T-cell (primary cell): ENCODE measurements at regions of chr6 and their contacts with region 1.

Region 1: GRCh38 chr6:25103603-25104002 is 167.8 kb upstream of the RIPOR2 start:
- DNase-seq: no peak
- ATAC-seq: no peak
- H3K4me3 ChIP-seq: no peak overlapping the region
- H3K4me3 Mint-ChIP-seq: no peak overlapping the region
- H3K27ac ChIP-seq: no peak overlapping the region
- H3K27ac Mint-ChIP-seq: no peak overlapping the region
- H3K4me1 ChIP-seq: no peaks in the 10 kb centered on the region
- H3K4me1 Mint-ChIP-seq: peaks cover 0 to 9% (median 7%) of the 10 kb centered on the region in 3 donors
- H3K27me3 ChIP-seq: no peaks in the 10 kb centered on the region
- H3K27me3 Mint-ChIP-seq: no peaks in the 10 kb centered on the region

Region 2: DNA sequence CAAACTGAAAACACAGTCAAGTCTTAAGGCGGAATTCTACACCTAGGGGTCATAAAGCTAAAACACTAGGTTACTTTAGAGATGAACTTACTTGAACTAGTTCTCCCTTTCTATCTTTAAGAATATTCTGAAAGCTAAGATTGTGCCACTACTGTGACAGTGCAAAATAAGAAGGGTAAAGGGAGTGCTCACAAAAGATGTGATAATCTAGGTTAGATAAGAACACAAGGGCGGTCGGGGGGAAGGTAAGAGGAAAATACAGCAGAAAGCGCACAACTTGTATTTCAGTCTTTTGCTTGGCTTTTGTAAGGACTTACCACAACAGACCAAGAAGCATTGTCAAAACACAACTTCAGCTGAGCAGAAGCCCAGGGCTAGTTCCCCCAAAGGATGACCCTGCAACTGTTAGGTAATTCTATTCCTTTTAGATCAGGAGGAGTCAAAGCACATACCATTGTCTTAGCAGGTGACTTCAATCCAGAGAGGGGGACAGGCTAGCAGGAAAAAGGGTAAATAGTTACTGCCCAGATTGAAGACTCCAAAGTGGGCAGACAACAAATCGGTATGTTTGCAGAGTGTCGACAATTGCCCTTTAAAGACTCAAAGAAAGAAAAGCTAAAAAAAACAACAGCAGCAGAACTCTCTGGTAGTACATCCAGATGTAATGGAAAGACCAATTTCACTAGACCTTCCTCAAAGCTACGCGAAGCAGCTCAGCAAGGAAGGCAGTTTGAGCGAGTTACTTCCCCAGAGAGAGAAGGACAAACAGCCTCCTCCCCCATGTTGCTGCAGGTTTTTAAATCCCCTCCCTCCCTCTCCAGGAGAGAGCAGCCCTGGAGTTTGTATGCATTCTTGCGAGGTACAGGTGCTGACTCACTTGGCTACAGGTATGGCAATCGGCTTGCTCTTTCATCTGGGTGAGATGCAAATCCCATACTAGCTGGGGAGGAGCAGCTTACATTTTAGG is 226.8 kb before region 1 on chr6:
- CTCF ChIA-PET with region 1: interaction called in 1 of 2 experiments, 12 read pairs
- POLR2A ChIA-PET with region 1: no interaction called
- DNase-seq: no peak
- ATAC-seq: peak in 1 of 4 experiments; percentile 11
- H3K4me3 ChIP-seq: no peak overlapping the region
- H3K4me3 Mint-ChIP-seq: peak overlapping the region in 2 of 3 donors; percentile 8 to 30
- H3K27ac ChIP-seq: peak overlapping the region; percentile 19
- H3K27ac Mint-ChIP-seq: peak overlapping the region; percentile 75 to 80
- H3K4me1 ChIP-seq: peaks cover 29 to 38% of the 10 kb centered on the region in 2 experiments
- H3K4me1 Mint-ChIP-seq: peaks cover 90 to 92% (median 91%) of the 10 kb centered on the region in 3 donors
- H3K27me3 ChIP-seq: no peaks in the 10 kb centered on the region
- H3K27me3 Mint-ChIP-seq: no peaks in the 10 kb centered on the region

Region 3: DNA sequence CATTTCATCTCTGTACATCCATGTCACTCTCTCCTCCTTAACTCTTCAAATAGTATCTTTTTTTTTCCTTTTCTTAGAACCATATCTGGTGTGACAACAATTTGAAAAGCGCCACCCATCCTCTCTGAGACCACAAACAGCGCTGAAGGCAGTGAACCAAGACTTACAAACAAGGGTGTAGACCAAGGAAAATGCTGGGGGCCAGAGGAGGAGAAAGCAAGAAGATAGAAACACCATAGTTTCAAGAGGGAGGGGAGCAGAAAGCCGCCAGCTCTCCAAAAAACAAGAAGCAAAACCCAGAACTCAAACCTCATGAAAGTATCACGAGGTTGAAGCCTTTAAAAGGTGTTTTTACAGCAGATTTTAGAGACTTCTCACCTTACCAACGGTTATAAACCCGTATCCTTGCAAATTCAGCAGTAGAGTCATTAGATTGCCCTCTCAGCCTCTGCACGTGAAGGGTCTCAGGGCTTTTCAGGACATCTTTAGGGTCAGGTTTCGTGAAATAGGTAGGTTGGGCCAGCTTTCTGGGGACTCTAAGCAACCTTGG is 154.5 kb before region 1 on chr6:
- CTCF ChIA-PET with region 1: no interaction called
- POLR2A ChIA-PET with region 1: no interaction called
- DNase-seq: peak in 34 of 35 experiments; percentile 39 to 82 (median 60)
- ATAC-seq: peak; percentile 69 to 81 (median 78)
- H3K4me3 ChIP-seq: peak overlapping the region; percentile 24 to 60
- H3K4me3 Mint-ChIP-seq: peak overlapping the region; percentile 55 to 76 (median 60)
- H3K27ac ChIP-seq: peak overlapping the region; percentile 76
- H3K27ac Mint-ChIP-seq: peak overlapping the region; percentile 96 to 98
- H3K4me1 ChIP-seq: peaks cover 63 to 68% of the 10 kb centered on the region in 2 experiments
- H3K4me1 Mint-ChIP-seq: peaks cover 75 to 82% (median 78%) of the 10 kb centered on the region in 3 donors
- H3K27me3 ChIP-seq: no peaks in the 10 kb centered on the region
- H3K27me3 Mint-ChIP-seq: no peaks in the 10 kb centered on the region

Region 4: DNA sequence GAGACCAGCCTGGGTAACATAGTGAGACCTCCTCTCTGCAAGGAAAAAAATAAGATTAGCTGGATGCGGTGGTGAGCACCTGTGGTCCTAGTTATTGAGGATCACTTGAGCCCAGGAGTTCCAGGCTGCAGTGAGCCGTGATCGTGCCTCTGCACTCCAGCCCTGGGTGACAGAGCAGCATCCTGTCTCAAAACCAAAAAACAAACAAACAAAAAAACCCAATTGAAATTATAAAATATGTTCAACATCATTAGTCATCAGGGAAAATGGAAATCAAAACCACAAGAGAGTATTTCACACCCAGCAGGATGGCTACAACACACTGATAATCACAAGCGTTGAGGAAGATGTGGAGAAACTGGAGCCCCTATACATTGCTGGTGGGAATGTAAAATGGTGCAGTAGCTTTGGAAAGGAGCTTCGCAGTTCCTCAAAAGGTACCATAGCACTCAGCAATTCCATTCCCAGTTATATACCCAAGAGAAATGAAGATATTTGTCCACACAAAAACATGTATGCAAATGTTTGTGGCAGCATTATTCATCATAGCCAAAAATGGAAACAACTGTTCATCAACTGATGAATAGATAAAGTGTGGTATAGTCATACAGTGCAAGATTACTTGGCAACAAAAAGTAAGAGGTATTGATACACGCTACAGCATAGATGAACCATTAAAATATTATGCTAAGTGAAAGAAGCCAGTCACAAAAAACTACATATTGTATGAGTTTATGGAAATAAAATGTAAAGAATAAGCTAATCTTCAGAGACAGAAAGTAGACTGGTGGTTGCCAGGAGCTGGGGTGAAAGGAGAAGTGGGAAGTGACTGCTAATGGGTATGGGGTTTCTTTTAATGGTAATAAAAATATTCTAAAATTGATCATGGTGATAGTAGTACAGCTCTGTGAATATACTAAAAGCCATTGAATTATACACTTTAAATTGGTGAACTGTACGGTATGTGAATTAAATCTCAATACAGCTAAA is 129.1 kb before region 1 on chr6:
- CTCF ChIA-PET with region 1: no interaction called
- POLR2A ChIA-PET with region 1: interaction called in 1 of 2 experiments, 14 read pairs
- DNase-seq: peak in 4 of 35 experiments; percentile 8 to 56 (median 22)
- ATAC-seq: peak; percentile 80 to 89 (median 84)
- H3K4me3 ChIP-seq: no peak overlapping the region
- H3K4me3 Mint-ChIP-seq: peak overlapping the region; percentile 26 to 34 (median 34)
- H3K27ac ChIP-seq: peak overlapping the region; percentile 76
- H3K27ac Mint-ChIP-seq: peak overlapping the region; percentile 93 to 96
- H3K4me1 ChIP-seq: peaks cover 4 to 21% of the 10 kb centered on the region in 2 experiments
- H3K4me1 Mint-ChIP-seq: peaks cover 73 to 74% (median 73%) of the 10 kb centered on the region in 3 donors
- H3K27me3 ChIP-seq: no peaks in the 10 kb centered on the region
- H3K27me3 Mint-ChIP-seq: no peaks in the 10 kb centered on the region

Region 5: GRCh38 chr6:25179051-25179778 is 75.6 kb after region 1 on chr6:
- CTCF ChIA-PET with region 1: no interaction called
- POLR2A ChIA-PET with region 1: no interaction called
- DNase-seq: no peak
- ATAC-seq: no peak
- H3K4me3 ChIP-seq: no peak overlapping the region
- H3K4me3 Mint-ChIP-seq: no peak overlapping the region
- H3K27ac ChIP-seq: no peak overlapping the region
- H3K27ac Mint-ChIP-seq: peak overlapping the region in 1 of 2 donors; percentile 24
- H3K4me1 ChIP-seq: no peaks in the 10 kb centered on the region
- H3K4me1 Mint-ChIP-seq: peaks cover 0 to 8% (median 0%) of the 10 kb centered on the region in 3 donors
- H3K27me3 ChIP-seq: no peaks in the 10 kb centered on the region
- H3K27me3 Mint-ChIP-seq: no peaks in the 10 kb centered on the region